Vagina (tissue), 2 donors: ENCODE measurements at regions of chr7 and their contacts with region 1.

Region 1: GRCh38 chr7:37181550-37181932 is 267.1 kb downstream of the ELMO1 start:
- DNase-seq: no peak
- H3K4me3 ChIP-seq: no peak overlapping the region
- H3K27ac ChIP-seq: no peak overlapping the region
- H3K4me1 ChIP-seq: peaks cover 6% of the 10 kb centered on the region
- H3K27me3 ChIP-seq: no peaks in the 10 kb centered on the region
- CTCF ChIP-seq: no peak
- POLR2A ChIP-seq: no peak

Region 2: GRCh38 chr7:36967387-36967786 is 214.2 kb before region 1 on chr7:
- intact Hi-C with region 1: loop called (anchors 5 kb)
- DNase-seq: no peak
- H3K4me3 ChIP-seq: no peak overlapping the region
- H3K27ac ChIP-seq: no peak overlapping the region
- H3K4me1 ChIP-seq: no peaks in the 10 kb centered on the region
- H3K27me3 ChIP-seq: no peaks in the 10 kb centered on the region
- CTCF ChIP-seq: peak; percentile 65 to 78 (median 73)
- POLR2A ChIP-seq: no peak